Mammary epithelial cell (primary cell): ENCODE measurements at regions of chr22 and their contacts with region 1.

Region 1: GRCh38 chr22:19554834-19555404 is 30.7 kb upstream of the CLDN5 start:
- DNase-seq: peak; percentile 49
- H3K4me3 ChIP-seq: no peak overlapping the region
- H3K27ac ChIP-seq: no peak overlapping the region
- H3K4me1 ChIP-seq: peaks cover 5% of the 10 kb centered on the region
- H3K27me3 ChIP-seq: no peaks in the 10 kb centered on the region
- CTCF ChIP-seq: peak; percentile 22 to 38

Region 2: GRCh38 chr22:19509923-19510322 is 45.0 kb before region 1 on chr22:
- CTCF ChIA-PET with region 1: interaction called, 11 read pairs
- dilution Hi-C with region 1: no loop called
- in situ Hi-C with region 1: no loop called
- intact Hi-C with region 1: no loop called
- DNase-seq: no peak
- H3K4me3 ChIP-seq: no peak overlapping the region
- H3K27ac ChIP-seq: no peak overlapping the region
- H3K4me1 ChIP-seq: peaks cover 19% of the 10 kb centered on the region
- H3K27me3 ChIP-seq: no peaks in the 10 kb centered on the region
- CTCF ChIP-seq: no peak

Region 3: GRCh38 chr22:19523240-19524169 is 31.4 kb before region 1 on chr22:
- CTCF ChIA-PET with region 1: no interaction called
- dilution Hi-C with region 1: loop called (anchors 5 kb)
- in situ Hi-C with region 1: no loop called
- intact Hi-C with region 1: no loop called
- DNase-seq: peak; percentile 26
- H3K4me3 ChIP-seq: no peak overlapping the region
- H3K27ac ChIP-seq: no peak overlapping the region
- H3K4me1 ChIP-seq: peaks cover 9% of the 10 kb centered on the region
- H3K27me3 ChIP-seq: peaks cover 7% of the 10 kb centered on the region
- CTCF ChIP-seq: no peak

Region 4: DNA sequence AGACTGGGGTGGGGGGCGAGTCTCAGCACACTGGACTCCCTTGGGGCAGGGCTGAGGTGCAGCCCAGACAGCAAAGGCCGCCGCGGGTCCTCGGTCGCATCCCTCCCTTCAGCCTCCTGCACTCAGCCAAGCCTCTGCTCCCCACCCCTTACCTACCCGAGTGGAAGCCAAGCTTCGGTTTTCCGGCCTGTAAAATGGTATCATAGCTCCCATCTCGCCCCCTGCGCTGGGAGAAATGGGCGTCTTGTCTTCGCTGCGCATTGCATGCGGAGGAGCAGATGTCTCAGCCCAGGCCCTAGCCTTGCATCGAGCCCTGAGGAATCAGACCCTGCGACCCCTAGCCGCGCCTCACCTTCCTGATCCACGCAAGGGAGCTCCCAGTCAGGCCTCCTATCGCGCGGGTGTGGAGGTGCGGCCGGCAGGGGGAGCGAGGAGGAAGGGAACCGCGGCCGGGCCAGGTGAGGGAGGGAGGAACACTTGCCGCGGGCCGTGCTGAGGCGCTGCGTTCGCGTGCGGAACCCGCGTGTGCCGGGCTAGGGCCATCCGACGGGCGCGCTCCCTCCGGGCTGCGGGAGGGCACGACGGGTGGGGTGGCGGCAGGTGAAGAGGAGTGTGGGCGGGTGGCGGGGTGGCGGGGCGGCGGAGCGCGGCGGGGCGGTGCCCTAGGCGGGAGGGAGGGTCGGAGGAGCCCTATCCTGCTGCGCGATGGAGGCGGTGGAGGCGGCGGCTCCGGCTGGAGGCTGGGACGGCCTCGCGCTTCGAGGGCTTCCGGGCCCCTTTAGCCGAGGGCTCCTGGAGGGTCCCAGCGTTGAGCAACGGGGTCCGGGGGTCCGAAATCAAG is 201.6 kb after region 1 on chr22:
- CTCF ChIA-PET with region 1: no interaction called
- dilution Hi-C with region 1: no loop called
- in situ Hi-C with region 1: no loop called
- intact Hi-C with region 1: no loop called
- DNase-seq: peak; percentile 48
- H3K4me3 ChIP-seq: peak overlapping the region in 2 of 3 experiments; percentile 27 to 32
- H3K27ac ChIP-seq: no peak overlapping the region
- H3K4me1 ChIP-seq: peaks cover 16% of the 10 kb centered on the region
- H3K27me3 ChIP-seq: peaks cover 31% of the 10 kb centered on the region
- CTCF ChIP-seq: peak; percentile 44 to 75